Lower leg skin (tissue), 4 donors: ENCODE measurements at regions of chr11 and their contacts with region 1.

Region 1: DNA sequence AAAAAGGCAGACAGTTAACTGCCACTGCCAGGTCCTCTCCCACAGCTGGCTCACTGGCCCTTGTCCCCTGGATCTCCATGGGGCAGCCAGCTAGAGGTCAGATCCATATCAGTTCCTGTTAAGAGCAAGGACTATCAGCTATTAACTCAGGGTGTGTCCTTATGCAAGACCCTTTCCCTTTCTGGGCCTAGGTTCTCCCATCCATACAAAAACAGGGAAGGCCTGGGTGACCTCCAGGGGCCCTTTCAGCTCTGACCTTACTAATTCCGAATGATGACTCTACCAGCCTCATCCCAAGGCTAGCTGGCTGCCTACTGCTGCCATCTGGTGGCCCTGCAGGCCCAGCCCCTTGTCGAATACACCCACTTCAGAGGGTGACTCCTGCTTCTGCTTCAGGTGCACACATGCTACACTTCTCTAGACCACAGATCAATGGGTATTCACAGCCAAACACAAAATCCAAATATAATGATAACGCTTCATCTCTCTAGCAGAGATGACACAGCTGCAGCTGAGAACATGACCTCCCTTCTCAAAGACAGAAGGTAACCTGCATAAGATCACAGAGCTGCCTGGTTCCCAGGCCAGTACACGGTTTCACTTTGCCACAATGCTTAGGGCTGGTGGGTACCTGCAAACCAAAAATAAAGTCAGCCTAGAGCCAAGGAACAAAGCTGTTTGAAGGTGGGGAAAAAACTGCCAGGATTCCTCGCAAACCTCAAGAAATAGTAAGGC is 34.1 kb downstream of the SERGEF start:
- DNase-seq: no peak
- H3K4me3 ChIP-seq: no peak overlapping the region
- CTCF ChIP-seq: no peak
- POLR2A ChIP-seq: no peak

Region 2: DNA sequence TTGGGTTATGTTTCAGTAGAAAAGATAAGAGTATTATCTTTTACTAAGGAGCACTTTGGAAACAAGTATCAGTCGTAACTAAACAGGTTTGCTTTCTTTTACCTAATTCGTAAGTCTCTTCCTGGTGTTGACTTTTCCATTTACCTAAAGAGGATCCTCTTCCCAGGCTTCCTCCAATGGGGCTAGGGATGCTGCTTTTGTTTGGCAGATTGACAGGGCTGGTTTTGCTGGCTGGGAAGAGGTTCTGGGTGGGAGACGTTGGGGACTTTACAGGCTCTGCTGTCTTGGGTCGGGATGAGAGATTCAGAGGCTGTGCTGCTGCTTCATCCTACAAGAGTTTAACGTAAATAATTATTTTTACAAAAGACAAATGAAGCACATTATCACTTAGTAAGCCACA is 1929.1 kb before region 1 on chr11:
- intact Hi-C with region 1: no loop called
- DNase-seq: no peak
- H3K4me3 ChIP-seq: no peak overlapping the region
- CTCF ChIP-seq: no peak
- POLR2A ChIP-seq: no peak

Region 3: GRCh38 chr11:17593466-17594245 is 385.1 kb before region 1 on chr11:
- intact Hi-C with region 1: no loop called
- DNase-seq: peak in 1 of 2 donors; percentile 76
- H3K4me3 ChIP-seq: no peak overlapping the region
- CTCF ChIP-seq: no peak
- POLR2A ChIP-seq: no peak

Region 4: DNA sequence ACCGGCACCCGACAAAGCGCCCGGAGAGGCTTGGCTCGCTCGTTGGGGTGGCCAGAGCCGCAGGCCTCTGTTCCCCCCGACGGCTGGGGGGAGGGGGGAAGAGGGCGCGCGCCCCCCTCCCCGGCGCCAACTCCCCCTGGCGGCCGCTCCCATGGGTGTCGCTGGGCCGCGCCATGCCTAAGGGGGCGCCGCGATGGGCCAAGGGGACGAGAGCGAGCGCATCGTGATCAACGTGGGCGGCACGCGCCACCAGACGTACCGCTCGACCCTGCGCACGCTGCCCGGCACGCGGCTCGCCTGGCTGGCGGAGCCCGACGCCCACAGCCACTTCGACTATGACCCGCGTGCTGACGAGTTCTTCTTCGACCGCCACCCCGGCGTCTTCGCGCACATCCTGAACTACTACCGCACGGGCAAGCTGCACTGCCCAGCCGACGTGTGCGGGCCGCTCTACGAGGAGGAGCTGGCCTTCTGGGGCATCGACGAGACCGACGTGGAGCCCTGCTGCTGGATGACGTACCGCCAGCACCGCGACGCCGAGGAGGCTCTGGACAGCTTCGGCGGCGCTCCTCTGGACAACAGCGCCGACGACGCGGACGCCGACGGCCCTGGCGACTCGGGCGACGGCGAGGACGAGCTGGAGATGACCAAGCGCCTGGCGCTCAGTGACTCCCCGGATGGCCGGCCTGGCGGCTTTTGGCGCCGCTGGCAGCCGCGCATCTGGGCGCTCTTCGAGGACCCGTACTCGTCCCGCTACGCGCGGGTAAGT is 242.7 kb before region 1 on chr11:
- intact Hi-C with region 1: loop called (anchors 1 kb)
- DNase-seq: no peak
- H3K4me3 ChIP-seq: no peak overlapping the region
- CTCF ChIP-seq: no peak
- POLR2A ChIP-seq: no peak

Region 5: GRCh38 chr11:17760102-17761029 is 218.4 kb before region 1 on chr11:
- intact Hi-C with region 1: loop called (anchors 10 kb)
- DNase-seq: no peak
- H3K4me3 ChIP-seq: no peak overlapping the region
- CTCF ChIP-seq: no peak
- POLR2A ChIP-seq: no peak